ENCODE measurements at regions of chr14 and their contacts with region 1.

Region 1: GRCh38 chr14:60622917-60623257 is 26.4 kb downstream of the SIX1 start:
- DNase-seq: no peak

Region 2: DNA sequence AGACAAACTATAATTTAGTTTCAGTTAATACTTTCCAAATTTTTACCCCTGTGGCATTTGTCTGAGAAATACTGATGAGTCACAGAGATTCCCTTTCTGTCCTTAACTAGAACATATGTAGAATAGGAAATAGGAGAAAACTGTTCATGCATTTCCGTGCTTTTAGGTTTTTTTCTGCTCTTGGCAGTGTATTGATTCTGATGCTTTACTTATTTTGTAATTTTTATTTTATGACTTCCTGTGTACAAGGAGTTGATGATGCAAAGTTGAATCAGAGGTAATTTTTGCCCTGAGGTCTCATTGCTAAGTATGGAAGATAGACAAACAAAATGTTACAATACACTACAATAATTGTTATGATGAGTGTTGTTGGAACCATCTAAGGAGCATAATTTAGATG is 134.7 kb after region 1 on chr14:
- intact Hi-C with region 1: no loop called
- DNase-seq: no peak

Region 3: DNA sequence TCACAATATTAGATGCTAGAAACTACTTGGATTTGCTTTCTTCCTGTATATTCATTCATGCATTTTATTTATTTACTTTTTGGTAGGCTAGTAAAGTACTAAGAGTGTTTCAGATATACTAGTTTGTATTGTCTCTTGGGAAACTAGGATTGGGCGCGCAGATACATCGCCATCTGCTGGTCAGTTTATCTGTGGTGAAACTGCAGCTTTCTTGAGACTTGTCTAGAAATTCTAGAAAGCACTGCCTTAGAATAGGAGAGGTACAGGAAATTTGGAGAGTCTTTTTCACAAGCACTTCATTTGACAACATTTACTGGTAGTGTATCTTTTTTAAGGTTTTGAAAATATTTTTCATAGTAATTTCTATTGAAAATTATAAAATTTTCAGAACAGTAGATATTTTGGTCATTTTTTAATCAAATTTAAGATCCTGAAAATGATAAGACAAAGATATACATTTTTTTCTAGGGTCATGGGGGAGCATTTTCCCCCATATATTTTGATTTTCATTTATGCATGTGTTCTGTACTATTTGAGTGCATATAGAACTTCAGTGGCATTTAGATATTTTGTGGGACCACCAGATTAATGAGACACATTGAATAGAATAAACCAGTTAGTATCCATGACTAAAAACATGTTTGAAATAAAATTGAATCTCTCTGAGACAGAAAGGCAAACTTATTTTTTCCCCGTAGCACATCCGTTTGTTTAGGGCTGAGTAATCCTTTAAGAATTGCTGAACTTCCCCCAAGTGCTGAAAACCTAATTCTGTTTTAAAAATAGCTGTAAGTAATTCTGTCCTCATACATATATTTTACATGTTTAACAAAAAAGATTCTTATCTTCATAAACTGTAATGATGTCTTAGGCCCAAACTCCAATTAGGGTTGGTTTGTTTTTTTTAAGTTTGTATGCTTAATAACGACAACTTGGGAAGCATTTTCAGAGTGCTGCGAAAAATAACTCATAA is 402.6 kb after region 1 on chr14:
- intact Hi-C with region 1: loop called (anchors 1 kb)
- DNase-seq: no peak

Region 4: GRCh38 chr14:61252369-61253063 is 629.6 kb after region 1 on chr14:
- intact Hi-C with region 1: loop called (anchors 1 kb)
- DNase-seq: peak; percentile 78